ENCODE measurements at regions of chr2 and their contacts with region 1.

Region 1: DNA sequence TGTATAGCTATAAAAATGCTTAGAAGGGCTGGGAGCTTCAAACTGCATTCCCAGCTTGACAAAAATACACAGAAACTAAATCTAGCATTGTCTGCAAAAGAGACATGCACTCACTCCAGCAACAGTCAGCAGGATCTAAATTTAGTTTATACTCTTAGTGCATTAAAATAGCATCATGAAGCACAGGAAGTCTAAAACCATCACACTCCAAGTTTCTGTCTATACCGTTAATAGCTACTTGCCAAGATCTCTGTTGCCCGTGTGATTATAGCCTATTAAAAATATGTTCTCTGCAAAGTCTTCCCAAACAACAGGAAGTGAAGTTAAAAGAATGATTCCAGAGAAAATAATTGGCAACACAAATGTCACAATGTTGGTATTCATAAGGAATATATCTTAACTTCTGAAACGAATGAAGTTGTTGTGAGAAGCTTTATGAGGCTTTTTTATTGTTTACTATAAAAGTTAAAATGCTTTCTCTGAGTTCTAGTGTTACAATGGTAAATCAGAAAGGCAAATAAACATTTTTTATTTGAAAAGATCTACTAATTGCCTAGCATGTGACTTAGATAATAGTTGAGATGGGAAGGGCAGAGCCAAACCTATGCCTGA is 184.2 kb downstream of the ZNF385B start:
- DNase-seq: peak; percentile 30
- ATAC-seq: peak; percentile 90
- H3K4me3 ChIP-seq: no peak overlapping the region
- H3K27ac ChIP-seq: no peak overlapping the region
- H3K4me1 ChIP-seq: 0 out of 2 replicates have a peak, but pooled peaks cover 6% of the 10 kb centered on the region
- H3K27me3 ChIP-seq: no peaks in the 10 kb centered on the region
- CTCF ChIP-seq: no peak

Region 2: DNA sequence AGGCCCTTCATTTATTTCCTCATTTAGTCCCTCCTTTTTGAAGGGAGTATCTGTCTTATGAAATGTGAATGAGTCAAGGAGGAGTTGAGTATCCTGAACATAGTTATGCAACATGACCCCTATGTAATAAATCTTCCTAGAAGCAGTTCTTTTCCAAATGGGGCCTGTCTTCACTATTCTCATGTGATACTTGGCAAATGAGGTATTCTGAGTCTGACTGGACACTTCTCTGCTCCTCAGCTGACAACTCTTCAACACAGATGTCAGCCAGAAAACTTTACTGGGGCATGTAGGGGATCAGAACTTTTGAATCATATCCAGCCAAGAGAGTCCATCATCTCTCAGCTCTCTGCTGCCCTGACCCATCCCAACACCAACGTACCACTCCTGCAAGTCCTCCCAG is 107.4 kb before region 1 on chr2:
- CTCF ChIA-PET with region 1: no interaction called
- POLR2A ChIA-PET with region 1: no interaction called
- intact Hi-C with region 1: loop called (anchors 10 kb)
- DNase-seq: peak; percentile 68
- ATAC-seq: no peak
- H3K4me3 ChIP-seq: no peak overlapping the region
- H3K27ac ChIP-seq: no peak overlapping the region
- H3K4me1 ChIP-seq: peaks cover 27% of the 10 kb centered on the region
- H3K27me3 ChIP-seq: no peaks in the 10 kb centered on the region
- CTCF ChIP-seq: no peak

Region 3: DNA sequence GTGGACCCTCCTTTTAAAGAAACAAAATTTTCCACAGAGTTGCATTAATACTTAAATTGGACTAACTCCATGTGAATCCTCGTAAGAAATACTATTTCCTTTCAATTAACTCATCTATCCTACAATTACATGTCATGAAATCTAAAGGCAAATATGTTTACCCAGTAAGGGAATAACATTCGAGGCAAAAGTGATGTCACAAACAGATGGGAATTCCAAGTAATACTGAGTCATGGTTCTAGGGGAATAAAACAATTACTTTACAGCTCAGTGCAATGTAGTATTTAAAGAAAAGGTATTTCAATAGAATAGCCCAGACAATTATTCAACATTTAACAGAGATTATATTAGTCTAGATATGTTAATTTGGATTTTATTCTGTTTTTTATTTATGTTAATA is 21.6 kb before region 1 on chr2:
- CTCF ChIA-PET with region 1: no interaction called
- POLR2A ChIA-PET with region 1: no interaction called
- intact Hi-C with region 1: loop called (anchors 2 kb)
- DNase-seq: peak; percentile 70
- ATAC-seq: peak; percentile 74
- H3K4me3 ChIP-seq: no peak overlapping the region
- H3K27ac ChIP-seq: 0 out of 2 replicates have a peak overlapping the region, but pooled peaks have one; percentile 7
- H3K4me1 ChIP-seq: peaks cover 27% of the 10 kb centered on the region
- H3K27me3 ChIP-seq: no peaks in the 10 kb centered on the region
- CTCF ChIP-seq: no peak

Region 4: GRCh38 chr2:179715871-179716270 is 38.7 kb after region 1 on chr2:
- CTCF ChIA-PET with region 1: no interaction called
- POLR2A ChIA-PET with region 1: no interaction called
- intact Hi-C with region 1: loop called (anchors 5 kb)
- DNase-seq: no peak
- ATAC-seq: no peak
- H3K4me3 ChIP-seq: no peak overlapping the region
- H3K27ac ChIP-seq: no peak overlapping the region
- H3K4me1 ChIP-seq: peaks cover 13% of the 10 kb centered on the region
- H3K27me3 ChIP-seq: no peaks in the 10 kb centered on the region
- CTCF ChIP-seq: no peak